ENCODE measurements at regions of chr2 and their contacts with region 1.

Region 1: GRCh38 chr2:55232084-55232862 is at the starts of genes CLHC1 and RPS27A:
- DNase-seq: peak; percentile 92
- H3K4me3 ChIP-seq: peak within 1 kb of the TSS; percentile 83 to 96 (median 92)
- H3K27ac ChIP-seq: peak within 1 kb of the TSS; percentile 99
- H3K4me1 ChIP-seq: peaks cover 36% of the 10 kb centered on the region
- H3K27me3 ChIP-seq: no peaks in the 10 kb centered on the region
- CTCF ChIP-seq: no peak
- POLR2A ChIP-seq: peak; percentile 92
- total RNA-seq, gene CLHC1: 10.2 and 12.3 TPM in 2 replicates
- total RNA-seq, gene RPS27A: 926 and 939 TPM in 2 replicates

Region 2: GRCh38 chr2:55063226-55063625 is 169.0 kb before region 1 on chr2:
- CTCF ChIA-PET with region 1: no interaction called
- POLR2A ChIA-PET with region 1: no interaction called
- dilution Hi-C with region 1: no loop called
- intact Hi-C with region 1: no loop called
- DNase-seq: no peak
- H3K4me3 ChIP-seq: no peak overlapping the region
- H3K27ac ChIP-seq: no peak overlapping the region
- H3K4me1 ChIP-seq: no peaks in the 10 kb centered on the region
- H3K27me3 ChIP-seq: no peaks in the 10 kb centered on the region
- CTCF ChIP-seq: no peak
- POLR2A ChIP-seq: no peak

Region 3: DNA sequence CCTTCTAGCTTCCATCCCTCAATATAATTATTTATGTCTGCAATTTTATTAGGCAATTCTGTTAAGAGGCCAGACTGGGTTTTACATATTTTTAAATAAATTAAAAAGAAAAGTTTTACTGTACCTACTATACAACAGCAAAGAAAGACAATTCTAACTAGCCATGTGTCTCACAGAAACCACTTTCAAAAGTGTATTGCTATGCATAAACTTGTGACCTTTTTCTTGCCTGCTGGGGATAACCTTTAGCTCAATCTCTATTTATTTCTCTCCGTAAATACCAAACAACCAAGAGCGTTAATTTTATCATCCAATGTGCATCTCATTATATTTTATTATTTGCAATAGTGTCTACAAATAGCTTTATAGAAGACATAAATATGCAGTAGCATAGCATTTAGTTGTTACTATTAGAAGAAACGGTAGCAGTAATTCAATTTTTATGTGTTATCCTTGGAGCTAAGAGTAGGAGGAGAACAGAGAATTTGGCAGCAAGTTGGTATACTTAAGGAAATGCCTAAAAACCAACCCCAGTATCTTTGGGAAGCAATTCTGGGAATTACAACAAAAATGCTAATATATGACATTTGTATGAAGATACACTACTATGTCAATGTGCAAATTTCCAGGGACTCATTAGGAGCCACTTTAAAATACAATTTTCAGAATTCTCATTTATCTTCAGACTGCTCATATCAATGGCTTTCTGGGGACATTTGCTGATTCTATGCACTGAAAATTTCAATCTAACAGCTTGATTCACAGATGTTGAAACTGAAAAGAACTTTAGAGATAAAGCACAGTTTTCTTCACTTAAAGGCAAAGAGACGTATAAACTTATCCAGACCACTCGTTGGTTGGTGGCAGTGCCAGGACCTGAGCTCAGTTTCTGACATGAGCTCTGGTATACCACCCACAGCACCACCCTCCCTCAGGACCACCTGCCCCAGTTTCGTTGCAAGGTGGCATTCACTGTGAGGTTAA is 159.0 kb before region 1 on chr2:
- CTCF ChIA-PET with region 1: no interaction called
- POLR2A ChIA-PET with region 1: interaction called, 11 read pairs
- dilution Hi-C with region 1: no loop called
- intact Hi-C with region 1: no loop called
- DNase-seq: no peak
- H3K4me3 ChIP-seq: no peak overlapping the region
- H3K27ac ChIP-seq: no peak overlapping the region
- H3K4me1 ChIP-seq: peaks cover 7% of the 10 kb centered on the region
- H3K27me3 ChIP-seq: no peaks in the 10 kb centered on the region
- CTCF ChIP-seq: no peak
- POLR2A ChIP-seq: no peak

Region 4: DNA sequence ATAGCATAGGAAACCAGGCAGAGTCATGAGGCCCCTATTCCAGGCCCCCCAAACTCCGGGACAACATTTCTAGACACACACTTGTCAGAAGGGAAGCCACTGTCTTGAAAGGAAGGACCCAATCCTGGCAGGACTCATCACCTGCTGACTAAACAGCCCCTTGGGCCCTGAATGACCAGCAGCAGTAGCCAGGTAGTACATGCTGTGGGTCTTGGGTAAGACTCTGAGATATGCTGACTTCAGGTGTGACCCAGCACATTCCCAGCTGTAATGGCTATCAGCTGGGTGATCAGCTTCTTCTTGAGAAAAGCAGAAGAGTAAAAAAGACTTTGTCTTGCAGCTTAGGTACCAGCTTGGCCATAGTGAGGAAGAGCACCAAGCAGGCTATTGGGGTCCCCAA is 35.8 kb before region 1 on chr2:
- CTCF ChIA-PET with region 1: no interaction called
- POLR2A ChIA-PET with region 1: no interaction called
- dilution Hi-C with region 1: no loop called
- intact Hi-C with region 1: no loop called
- DNase-seq: no peak
- H3K4me3 ChIP-seq: no peak overlapping the region
- H3K27ac ChIP-seq: no peak overlapping the region
- H3K4me1 ChIP-seq: no peaks in the 10 kb centered on the region
- H3K27me3 ChIP-seq: no peaks in the 10 kb centered on the region
- CTCF ChIP-seq: no peak
- POLR2A ChIP-seq: no peak

Region 5: DNA sequence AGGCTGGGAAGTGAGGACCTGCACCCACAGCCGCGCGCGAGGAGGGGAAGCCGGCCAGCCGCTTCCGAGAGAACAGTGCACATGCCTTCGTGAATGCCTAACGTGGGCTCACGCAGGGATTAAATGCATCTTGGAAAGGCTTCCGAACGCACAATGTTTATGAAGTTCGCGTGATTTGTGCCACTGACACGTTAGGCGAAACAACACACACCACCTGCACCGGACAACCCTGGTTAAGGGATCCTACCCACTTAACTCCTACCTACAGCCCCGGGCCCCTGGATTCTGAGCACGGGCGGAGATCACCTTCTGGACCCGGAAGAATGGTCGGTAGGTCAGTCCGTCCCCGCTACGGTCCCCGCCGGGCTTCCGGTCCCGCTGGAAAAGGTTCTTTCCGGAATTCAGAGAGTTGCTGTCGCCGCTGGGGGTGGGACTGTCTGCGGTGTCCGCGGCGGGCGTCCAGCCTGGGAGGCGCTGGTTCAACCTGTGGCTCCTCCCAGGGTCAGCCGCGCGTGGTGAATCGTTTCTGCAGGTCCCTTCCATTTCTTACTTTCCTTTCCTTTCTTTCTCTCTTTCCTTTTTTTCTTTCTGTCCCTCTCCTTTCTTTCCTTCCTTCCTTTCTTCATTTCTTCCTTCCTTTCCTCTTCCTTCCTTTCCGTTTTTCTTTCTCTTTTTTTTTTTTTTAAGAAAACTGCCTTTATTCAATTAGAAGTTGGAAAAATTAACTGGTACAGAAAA is 36.8 kb after region 1 on chr2 and contains the start of gene MTIF2:
- CTCF ChIA-PET with region 1: no interaction called
- POLR2A ChIA-PET with region 1: no interaction called
- dilution Hi-C with region 1: no loop called
- intact Hi-C with region 1: loop called (anchors 5 kb)
- DNase-seq: peak; percentile 89
- H3K4me3 ChIP-seq: peak within 1 kb of the TSS; percentile 13 to 78 (median 58)
- H3K27ac ChIP-seq: peak within 1 kb of the TSS; percentile 7
- H3K4me1 ChIP-seq: peaks cover 10% of the 10 kb centered on the region
- H3K27me3 ChIP-seq: no peaks in the 10 kb centered on the region
- CTCF ChIP-seq: no peak
- POLR2A ChIP-seq: peak; percentile 98
- total RNA-seq, gene MTIF2: 26.8 and 26.9 TPM in 2 replicates

Region 6: GRCh38 chr2:55431982-55432627 is 199.8 kb after region 1 on chr2:
- CTCF ChIA-PET with region 1: no interaction called
- POLR2A ChIA-PET with region 1: no interaction called
- dilution Hi-C with region 1: no loop called
- intact Hi-C with region 1: loop called (anchors 5 kb)
- DNase-seq: peak; percentile 58
- H3K4me3 ChIP-seq: no peak overlapping the region
- H3K27ac ChIP-seq: no peak overlapping the region
- H3K4me1 ChIP-seq: peaks cover 2% of the 10 kb centered on the region
- H3K27me3 ChIP-seq: no peaks in the 10 kb centered on the region
- CTCF ChIP-seq: peak; percentile 30 to 52
- POLR2A ChIP-seq: no peak

Region 7: GRCh38 chr2:55519938-55520885 is 287.9 kb after region 1 on chr2:
- CTCF ChIA-PET with region 1: no interaction called
- POLR2A ChIA-PET with region 1: no interaction called
- dilution Hi-C with region 1: no loop called
- intact Hi-C with region 1: loop called (anchors 10 kb)
- DNase-seq: peak; percentile 55
- H3K4me3 ChIP-seq: peak overlapping the region; percentile 61 to 91 (median 63)
- H3K27ac ChIP-seq: peak overlapping the region; percentile 21
- H3K4me1 ChIP-seq: peaks cover 4% of the 10 kb centered on the region
- H3K27me3 ChIP-seq: no peaks in the 10 kb centered on the region
- CTCF ChIP-seq: no peak
- POLR2A ChIP-seq: no peak